ENCODE measurements at regions of chr1 and their contacts with region 1.

Region 1: DNA sequence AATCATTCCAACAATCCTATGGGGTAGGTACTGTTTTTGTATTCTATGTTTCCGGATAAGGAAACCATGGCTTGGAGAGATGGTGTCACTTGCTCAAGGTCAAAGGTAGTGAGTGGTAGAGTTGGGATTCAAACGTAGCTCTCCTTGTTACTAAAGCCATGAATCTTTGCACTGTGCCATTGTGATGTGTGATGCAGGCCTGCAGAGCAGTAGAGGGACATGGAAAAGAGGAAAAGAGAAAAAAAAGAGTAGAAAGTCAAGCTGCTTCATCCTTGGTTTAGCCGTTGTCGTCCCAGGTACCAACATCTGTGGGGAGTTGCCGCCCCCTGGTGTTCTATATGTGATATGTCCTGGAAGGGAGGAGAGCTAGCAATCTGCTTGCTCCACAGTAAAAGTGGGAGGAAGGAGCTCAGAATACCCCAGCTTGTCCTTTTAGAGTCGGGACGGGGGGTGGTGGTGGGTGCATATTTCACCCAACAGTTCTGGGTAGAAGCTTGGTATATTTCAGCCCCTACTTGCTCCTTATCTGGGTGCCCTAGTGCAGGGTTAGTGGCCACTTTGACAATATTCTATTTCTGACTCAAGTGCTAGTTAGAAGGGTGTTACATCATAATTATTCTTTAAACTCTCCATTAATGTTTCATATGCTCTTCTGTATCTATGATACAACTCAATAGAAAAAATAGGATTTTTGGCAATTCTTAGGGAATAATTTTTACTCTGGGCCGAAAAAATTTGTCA is 98.4 kb downstream of the EBNA1BP2 start:
- DNase-seq: peak; percentile 61
- ATAC-seq: peak; percentile 95
- H3K4me3 ChIP-seq: no peak overlapping the region
- H3K27ac ChIP-seq: no peak overlapping the region
- H3K4me1 ChIP-seq: peaks cover 9 to 42% of the 10 kb centered on the region in 2 experiments; a peak in 3 of 4 replicates
- H3K27me3 ChIP-seq: no peaks in the 10 kb centered on the region
- CTCF ChIP-seq: peak; percentile 78 to 95 (median 88)
- POLR2A ChIP-seq: no peak
- RAD21 ChIP-seq: peak; percentile 99

Region 2: GRCh38 chr1:42766741-42767509 is 306.7 kb before region 1 on chr1 and contains the starts of genes C1orf50 and P3H1:
- CTCF ChIA-PET with region 1: interaction called, 25 read pairs
- POLR2A ChIA-PET with region 1: no interaction called
- RAD21 ChIA-PET with region 1: interaction called, 6 to 8 read pairs
- intact Hi-C with region 1: no loop called
- DNase-seq: peak; percentile 96
- ATAC-seq: peak; percentile 92
- H3K4me3 ChIP-seq: peak within 1 kb of the TSS; percentile 76 to 84
- H3K27ac ChIP-seq: peak within 1 kb of the TSS; percentile 70
- H3K4me1 ChIP-seq: peaks cover 11 to 18% of the 10 kb centered on the region in 2 experiments; a peak in 3 of 4 replicates
- H3K27me3 ChIP-seq: no peaks in the 10 kb centered on the region
- CTCF ChIP-seq: no peak
- POLR2A ChIP-seq: peak; percentile 86
- RAD21 ChIP-seq: no peak
- total RNA-seq, gene C1orf50: 5.8 TPM
- total RNA-seq, gene P3H1: 32.9 TPM

Region 3: DNA sequence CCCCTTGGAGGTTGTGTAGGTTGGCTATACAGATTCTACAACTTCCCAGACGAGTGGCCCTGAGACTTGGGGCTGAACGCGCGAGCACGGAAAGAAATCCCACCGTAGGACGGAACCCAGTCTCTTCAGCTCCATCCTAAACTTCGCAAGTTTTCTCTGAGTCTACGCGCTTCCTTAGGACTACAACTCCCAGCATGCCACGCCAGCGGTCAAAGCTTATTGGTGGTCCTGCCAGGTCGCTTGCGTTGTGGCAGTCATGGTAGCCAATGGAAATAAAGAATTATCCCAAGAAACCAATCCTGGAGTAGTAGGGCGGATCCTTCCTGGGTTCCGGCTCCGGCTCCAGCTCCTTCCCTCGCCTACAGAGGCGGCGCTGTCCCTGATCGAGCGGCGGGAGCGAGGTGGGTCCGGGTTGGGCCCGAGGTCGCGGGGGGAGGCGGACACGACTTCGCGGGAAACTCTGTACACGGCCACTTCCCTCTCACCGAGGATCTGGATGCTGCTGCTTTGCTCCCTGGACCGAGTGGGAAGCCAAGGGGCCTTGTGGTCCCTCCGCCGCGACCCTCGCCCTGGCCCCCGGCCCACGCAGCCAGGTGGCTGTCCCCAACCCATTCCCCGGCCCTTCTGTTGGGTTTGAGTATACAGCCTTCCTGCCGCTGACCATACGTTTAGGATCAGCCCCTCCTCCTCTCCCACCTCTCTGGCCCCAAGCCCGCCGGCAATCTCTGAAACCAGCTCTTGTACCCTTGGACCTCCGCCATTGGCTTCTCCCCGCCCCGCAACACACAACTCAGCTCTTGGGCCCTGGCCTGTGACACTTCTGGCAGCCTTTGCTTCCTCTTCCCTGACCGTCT is 227.2 kb before region 1 on chr1 and contains the start of gene ZNF691:
- CTCF ChIA-PET with region 1: interaction called, 10 read pairs
- POLR2A ChIA-PET with region 1: no interaction called
- RAD21 ChIA-PET with region 1: interaction called, 4 to 7 read pairs
- intact Hi-C with region 1: no loop called
- DNase-seq: peak; percentile 95
- ATAC-seq: peak; percentile 99
- H3K4me3 ChIP-seq: peak within 1 kb of the TSS; percentile 79 to 82
- H3K27ac ChIP-seq: peak within 1 kb of the TSS; percentile 53
- H3K4me1 ChIP-seq: peaks cover 7 to 16% of the 10 kb centered on the region in 2 experiments; a peak in 3 of 4 replicates
- H3K27me3 ChIP-seq: no peaks in the 10 kb centered on the region
- CTCF ChIP-seq: peak in 2 of 3 experiments; percentile 32 to 49; a peak in 4 of 6 replicates
- POLR2A ChIP-seq: peak; percentile 67
- RAD21 ChIP-seq: no peak
- total RNA-seq, gene ZNF691: 11.1 TPM

Region 4: DNA sequence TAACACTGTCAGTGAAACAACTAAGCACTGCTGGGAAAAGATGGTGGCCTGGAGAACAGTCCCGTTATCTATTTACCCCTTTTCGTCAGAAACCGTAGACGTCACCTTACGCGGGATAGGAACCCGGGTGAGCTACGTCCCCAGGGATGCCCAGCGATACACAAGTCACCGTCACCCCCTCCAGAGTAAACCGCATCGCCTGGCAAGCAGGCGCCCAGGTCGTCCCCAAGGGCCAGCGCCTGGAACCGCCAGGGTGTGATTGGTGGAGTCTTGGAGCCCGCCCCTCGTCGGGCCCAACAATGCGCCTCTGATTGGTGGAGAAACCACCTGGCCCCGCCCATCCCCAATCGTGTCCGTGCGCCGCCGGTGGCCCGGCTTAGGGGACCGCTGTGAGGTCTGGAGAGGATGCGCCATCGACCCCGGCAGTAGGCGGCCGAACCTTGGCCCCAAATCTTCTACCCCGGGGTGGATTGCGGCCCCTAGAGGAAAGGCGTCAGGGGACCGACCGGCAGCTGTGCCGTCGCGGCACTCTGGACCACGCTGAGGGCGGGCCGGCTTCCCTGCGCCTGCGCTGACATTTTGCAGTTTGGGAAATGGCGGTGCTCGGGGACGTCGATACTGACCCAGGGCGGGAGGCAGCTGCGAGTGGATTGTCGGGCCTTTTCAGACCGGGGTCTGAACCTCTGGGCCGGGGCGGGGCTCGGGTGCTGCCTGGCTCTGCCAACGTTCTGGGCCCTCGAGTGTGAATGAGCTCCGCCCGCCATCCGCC is 149.4 kb before region 1 on chr1:
- CTCF ChIA-PET with region 1: interaction called, 267 read pairs
- POLR2A ChIA-PET with region 1: interaction called, 16 read pairs
- RAD21 ChIA-PET with region 1: interaction called, 21 to 43 read pairs
- intact Hi-C with region 1: no loop called
- DNase-seq: peak; percentile 82
- ATAC-seq: peak; percentile 84
- H3K4me3 ChIP-seq: peak overlapping the region; percentile 61 to 70
- H3K27ac ChIP-seq: peak overlapping the region; percentile 81
- H3K4me1 ChIP-seq: peaks cover 9 to 52% of the 10 kb centered on the region in 2 experiments; a peak in 3 of 4 replicates
- H3K27me3 ChIP-seq: no peaks in the 10 kb centered on the region
- CTCF ChIP-seq: 0 out of 6 replicates have a peak, but pooled peaks of 2 of the 3 experiments have one; percentile 21 to 24
- POLR2A ChIP-seq: peak; percentile 72
- RAD21 ChIP-seq: no peak

Region 5: GRCh38 chr1:42936309-42937078 is 137.2 kb before region 1 on chr1:
- CTCF ChIA-PET with region 1: interaction called, 21 read pairs
- POLR2A ChIA-PET with region 1: interaction called, 3 read pairs
- RAD21 ChIA-PET with region 1: interaction called, 6 read pairs
- intact Hi-C with region 1: loop called (anchors 1 kb)
- DNase-seq: peak; percentile 75
- ATAC-seq: peak; percentile 65
- H3K4me3 ChIP-seq: peak overlapping the region in 1 of 2 experiments; percentile 26; a peak in 1 of 4 replicates
- H3K27ac ChIP-seq: peak overlapping the region; percentile 84
- H3K4me1 ChIP-seq: peaks cover 92 to 100% of the 10 kb centered on the region in 2 experiments
- H3K27me3 ChIP-seq: no peaks in the 10 kb centered on the region
- CTCF ChIP-seq: no peak
- POLR2A ChIP-seq: no peak
- RAD21 ChIP-seq: no peak

Region 6: DNA sequence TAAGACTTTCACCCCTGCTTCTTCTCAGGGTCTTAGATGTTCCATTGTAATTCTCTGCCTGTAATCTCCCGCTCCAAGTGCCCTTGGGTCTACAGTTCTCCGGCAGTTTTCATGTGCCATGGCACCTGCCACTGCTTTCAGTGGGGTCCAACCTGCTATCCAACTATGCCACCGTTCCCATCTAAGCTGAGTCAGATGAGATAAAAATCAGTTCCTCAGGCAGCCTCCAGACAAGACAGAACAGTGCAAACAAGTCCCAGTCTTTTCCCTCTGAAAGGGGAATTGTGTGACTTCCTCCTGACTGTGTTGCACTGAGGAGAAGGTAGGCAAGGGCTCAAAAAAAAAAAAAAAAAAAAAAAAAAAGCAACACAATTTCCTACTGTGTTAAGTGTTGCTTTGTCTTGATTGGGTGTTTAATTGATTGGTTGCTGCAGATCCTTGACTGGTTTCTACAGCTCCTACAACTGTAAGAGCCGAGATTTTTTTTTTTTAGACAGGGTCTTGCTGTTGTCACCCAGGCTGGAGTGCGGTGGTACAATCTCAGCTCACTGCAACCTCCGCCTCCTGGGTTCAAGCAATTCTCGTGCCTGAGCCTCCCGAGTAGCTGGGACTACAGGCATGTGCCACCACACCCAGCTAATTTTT is 47.7 kb after region 1 on chr1:
- CTCF ChIA-PET with region 1: no interaction called
- POLR2A ChIA-PET with region 1: no interaction called
- RAD21 ChIA-PET with region 1: no interaction called
- intact Hi-C with region 1: no loop called
- DNase-seq: no peak
- ATAC-seq: no peak
- H3K4me3 ChIP-seq: no peak overlapping the region
- H3K27ac ChIP-seq: no peak overlapping the region
- H3K4me1 ChIP-seq: no peaks in the 10 kb centered on the region
- H3K27me3 ChIP-seq: no peaks in the 10 kb centered on the region
- CTCF ChIP-seq: no peak
- POLR2A ChIP-seq: no peak
- RAD21 ChIP-seq: no peak

Region 7: GRCh38 chr1:43274125-43274803 is 200.6 kb after region 1 on chr1:
- CTCF ChIA-PET with region 1: no interaction called
- POLR2A ChIA-PET with region 1: no interaction called
- RAD21 ChIA-PET with region 1: no interaction called
- intact Hi-C with region 1: no loop called
- DNase-seq: no peak
- ATAC-seq: no peak
- H3K4me3 ChIP-seq: no peak overlapping the region
- H3K27ac ChIP-seq: no peak overlapping the region
- H3K4me1 ChIP-seq: peaks cover 15 to 30% of the 10 kb centered on the region in 2 experiments
- H3K27me3 ChIP-seq: no peaks in the 10 kb centered on the region
- CTCF ChIP-seq: no peak
- POLR2A ChIP-seq: no peak
- RAD21 ChIP-seq: no peak

Measured in HCT116 (cell line).